Dorsolateral prefrontal cortex (tissue), 120 donors: ENCODE measurements at regions of chr15 and their contacts with region 1.

Region 1: GRCh38 chr15:96356494-96357455 is 26.3 kb downstream of the NR2F2 start:
- DNase-seq: peak in 8 of 10 donors; percentile 56 to 80 (median 64)
- H3K4me3 ChIP-seq: peak overlapping the region; percentile 39 to 76 (median 64)
- H3K27ac ChIP-seq: peak overlapping the region in 35 of 59 donors; percentile 2 to 91 (median 59)
- H3K27me3 ChIP-seq: peaks cover 10 to 99% (median 96%) of the 10 kb centered on the region in 45 donors
- CTCF ChIP-seq: peak; percentile 68 to 100 (median 96)

Region 2: GRCh38 chr15:96130734-96131133 is 226.0 kb before region 1 on chr15:
- intact Hi-C with region 1: no loop called
- DNase-seq: no peak
- H3K4me3 ChIP-seq: no peak overlapping the region
- H3K27ac ChIP-seq: no peak overlapping the region
- H3K27me3 ChIP-seq: peaks cover 0 to 11% (median 0%) of the 10 kb centered on the region in 45 donors
- CTCF ChIP-seq: no peak

Region 3: DNA sequence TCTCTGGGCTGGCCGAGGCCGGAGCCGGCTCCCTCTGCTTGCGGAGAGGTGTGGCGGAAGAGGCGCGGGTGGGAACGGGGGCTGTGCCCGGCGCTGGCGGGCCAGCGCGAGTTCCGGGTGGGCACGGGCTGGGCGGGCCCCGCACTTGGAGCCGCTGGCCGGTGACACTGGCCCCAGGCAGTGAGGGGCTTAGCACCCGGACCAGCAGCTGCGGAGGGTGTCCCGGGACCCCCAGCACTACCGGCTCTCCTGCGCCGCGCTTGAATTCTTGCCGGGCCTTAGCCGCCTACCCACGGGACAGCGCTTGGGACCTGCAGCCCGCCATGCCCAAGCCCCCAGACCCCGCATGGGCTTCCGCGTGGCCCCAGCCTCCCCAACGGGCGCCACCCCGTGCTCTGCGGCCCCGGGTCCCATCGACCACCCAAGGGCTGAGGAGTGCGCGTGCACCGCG is 867.4 kb after region 1 on chr15:
- intact Hi-C with region 1: no loop called
- DNase-seq: no peak
- H3K4me3 ChIP-seq: no peak overlapping the region
- H3K27ac ChIP-seq: no peak overlapping the region
- H3K27me3 ChIP-seq: peaks cover 0 to 3% (median 0%) of the 10 kb centered on the region in 45 donors
- CTCF ChIP-seq: no peak

Region 4: GRCh38 chr15:97234851-97235610 is 878.3 kb after region 1 on chr15:
- intact Hi-C with region 1: loop called in 1 of 2 experiments (anchors 5 kb)
- DNase-seq: peak in 4 of 10 donors; percentile 29 to 54 (median 40)
- H3K4me3 ChIP-seq: peak overlapping the region in 10 of 59 donors; percentile 2 to 33 (median 13)
- H3K27ac ChIP-seq: no peak overlapping the region
- H3K27me3 ChIP-seq: peaks cover 0 to 66% (median 8%) of the 10 kb centered on the region in 45 donors
- CTCF ChIP-seq: peak; percentile 64 to 87 (median 80)

Region 5: GRCh38 chr15:97759363-97759762 is 1402.6 kb after region 1 on chr15:
- intact Hi-C with region 1: loop called in 1 of 2 experiments (anchors 5 kb)
- DNase-seq: no peak
- H3K4me3 ChIP-seq: no peak overlapping the region
- H3K27ac ChIP-seq: no peak overlapping the region
- H3K27me3 ChIP-seq: peaks cover 0 to 51% (median 5%) of the 10 kb centered on the region in 45 donors
- CTCF ChIP-seq: no peak